Spleen (tissue), 13 donors: ENCODE measurements at regions of chr16 and their contacts with region 1.

Region 1: GRCh38 chr16:31382485-31383161 is 10.5 kb upstream of the ITGAD start:
- DNase-seq: peak; percentile 93
- H3K4me3 ChIP-seq: no peak overlapping the region
- H3K27ac ChIP-seq: no peak overlapping the region
- H3K4me1 ChIP-seq: peaks cover 0 to 14% (median 6%) of the 10 kb centered on the region in 6 donors
- H3K27me3 ChIP-seq: peaks cover 0 to 30% (median 0%) of the 10 kb centered on the region in 7 donors
- CTCF ChIP-seq: peak; percentile 34 to 87 (median 71)
- POLR2A ChIP-seq: no peak

Region 2: DNA sequence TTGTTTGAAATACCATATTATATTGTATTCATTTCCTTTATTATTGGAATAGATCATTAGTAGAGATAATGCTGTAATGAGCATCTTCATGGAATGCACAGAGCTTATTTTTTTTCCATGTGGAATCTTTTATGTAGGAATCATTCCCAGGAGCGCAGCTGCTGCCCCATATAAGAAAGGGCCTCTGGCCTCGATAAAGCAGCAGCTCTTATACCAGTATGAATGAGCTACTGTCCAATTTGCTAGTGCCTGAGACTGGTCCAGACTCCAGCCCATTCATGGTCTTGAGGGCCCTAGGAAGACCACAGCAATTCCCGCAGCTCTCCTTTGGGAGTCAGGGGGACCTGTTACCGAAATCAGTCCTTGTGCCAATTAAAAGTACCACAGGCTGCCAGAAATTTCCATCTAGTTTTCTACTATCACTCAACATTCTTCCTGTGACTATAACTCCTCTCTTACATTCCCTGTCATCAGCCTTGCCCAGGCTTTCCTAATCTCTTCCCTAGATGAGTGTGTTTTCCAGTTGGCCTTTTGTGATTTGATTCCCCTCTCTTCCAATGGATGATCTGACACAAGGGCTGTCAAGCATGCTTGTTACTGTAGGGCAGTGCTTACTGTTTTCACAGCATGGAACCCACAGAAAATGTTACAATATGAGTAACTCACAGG is 58.0 kb after region 1 on chr16:
- intact Hi-C with region 1: loop called (anchors 10 kb)
- DNase-seq: no peak
- H3K4me3 ChIP-seq: no peak overlapping the region
- H3K27ac ChIP-seq: no peak overlapping the region
- H3K4me1 ChIP-seq: peaks cover 0 to 31% (median 13%) of the 10 kb centered on the region in 6 donors
- H3K27me3 ChIP-seq: no peaks in the 10 kb centered on the region
- CTCF ChIP-seq: no peak
- POLR2A ChIP-seq: no peak

Region 3: DNA sequence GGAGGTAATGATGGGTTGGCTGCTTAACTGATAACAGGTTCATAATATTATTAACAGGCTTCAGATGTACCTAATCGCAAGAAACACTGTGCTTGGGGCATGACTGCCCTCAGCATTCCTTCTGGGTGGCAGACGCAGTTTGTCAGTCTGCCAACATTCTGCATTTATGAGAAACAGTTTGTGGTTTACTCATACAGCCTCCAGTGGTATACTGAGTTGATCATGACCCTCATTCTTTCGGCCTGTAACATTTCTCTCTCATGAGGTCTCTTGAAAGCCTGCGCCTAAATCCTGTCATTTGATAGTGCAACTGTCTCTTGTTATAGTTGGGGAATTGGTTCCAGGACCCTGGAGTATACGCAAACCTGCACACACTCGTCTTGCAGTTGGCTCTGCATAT is 130.5 kb after region 1 on chr16:
- intact Hi-C with region 1: no loop called
- DNase-seq: no peak
- H3K4me3 ChIP-seq: no peak overlapping the region
- H3K27ac ChIP-seq: no peak overlapping the region
- H3K4me1 ChIP-seq: peaks cover 0 to 21% (median 14%) of the 10 kb centered on the region in 6 donors
- H3K27me3 ChIP-seq: no peaks in the 10 kb centered on the region
- CTCF ChIP-seq: no peak
- POLR2A ChIP-seq: no peak